ENCODE measurements at regions of chr6 and their contacts with region 1.

Region 1: DNA sequence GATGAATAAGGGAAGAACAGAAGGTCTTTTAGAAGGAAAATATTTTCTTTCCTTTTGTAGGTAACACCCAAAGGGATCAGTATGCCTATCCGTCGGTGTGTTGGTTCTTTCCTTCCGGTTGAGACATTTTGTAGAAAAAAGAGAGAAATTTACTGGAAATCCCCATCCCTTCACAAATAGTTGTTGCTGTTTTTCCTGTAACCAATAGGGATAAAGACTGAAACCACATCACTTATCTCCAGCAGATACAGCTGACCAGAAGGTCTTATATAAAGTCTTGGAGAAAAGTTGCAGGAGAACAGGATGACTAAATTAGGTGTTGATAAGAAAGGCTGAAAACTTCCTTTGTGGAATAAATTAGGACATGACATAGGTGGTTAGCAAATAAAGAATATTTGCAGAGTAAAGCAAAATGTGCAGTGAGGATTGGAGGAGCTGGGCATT is 14.8 kb upstream of the HLA-DRB1 start:
- DNase-seq: peak; percentile 87
- ATAC-seq: peak; percentile 74
- H3K4me3 ChIP-seq: peak overlapping the region in 4 of 5 experiments; percentile 39 to 57 (median 42)
- H3K4me3 Mint-ChIP-seq: peak overlapping the region; percentile 87
- H3K27ac ChIP-seq: peak overlapping the region; percentile 99 to 100
- H3K27ac Mint-ChIP-seq: peak overlapping the region; percentile 97
- H3K4me1 ChIP-seq: peaks cover 52 to 57% of the 10 kb centered on the region in 2 donors
- H3K4me1 Mint-ChIP-seq: peaks cover 69% of the 10 kb centered on the region
- H3K27me3 ChIP-seq: no peaks in the 10 kb centered on the region
- H3K27me3 Mint-ChIP-seq: no peaks in the 10 kb centered on the region
- CTCF ChIP-seq: no peak

Region 2: DNA sequence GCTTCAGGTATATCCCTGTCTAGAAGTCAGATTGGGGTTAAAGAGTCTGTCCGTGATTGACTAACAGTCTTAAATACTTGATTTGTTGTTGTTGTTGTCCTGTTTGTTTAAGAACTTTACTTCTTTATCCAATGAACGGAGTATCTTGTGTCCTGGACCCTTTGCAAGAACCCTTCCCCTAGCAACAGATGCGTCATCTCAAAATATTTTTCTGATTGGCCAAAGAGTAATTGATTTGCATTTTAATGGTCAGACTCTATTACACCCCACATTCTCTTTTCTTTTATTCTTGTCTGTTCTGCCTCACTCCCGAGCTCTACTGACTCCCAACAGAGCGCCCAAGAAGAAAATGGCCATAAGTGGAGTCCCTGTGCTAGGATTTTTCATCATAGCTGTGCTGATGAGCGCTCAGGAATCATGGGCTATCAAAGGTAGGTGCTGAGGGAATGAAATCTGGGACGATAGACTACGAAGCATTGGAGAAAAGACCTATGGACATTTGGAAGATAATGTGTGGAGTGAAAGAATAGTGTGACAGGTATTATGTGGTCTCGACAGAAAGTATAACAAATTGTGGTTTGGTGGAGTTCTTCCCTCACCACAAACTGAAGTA is 164.7 kb before region 1 on chr6 and contains the start of gene HLA-DRA:
- CTCF ChIA-PET with region 1: interaction called, 3 read pairs
- POLR2A ChIA-PET with region 1: interaction called, 5 read pairs
- intact Hi-C with region 1: loop called (anchors 1 kb)
- DNase-seq: peak; percentile 97
- ATAC-seq: peak; percentile 69
- H3K4me3 ChIP-seq: peak within 1 kb of the TSS; percentile 77 to 100 (median 99)
- H3K4me3 Mint-ChIP-seq: peak within 1 kb of the TSS; percentile 98
- H3K27ac ChIP-seq: peak within 1 kb of the TSS; percentile 99 to 100
- H3K27ac Mint-ChIP-seq: peak within 1 kb of the TSS; percentile 99
- H3K4me1 ChIP-seq: peaks cover 70 to 71% of the 10 kb centered on the region in 2 donors
- H3K4me1 Mint-ChIP-seq: peaks cover 80% of the 10 kb centered on the region
- H3K27me3 ChIP-seq: no peaks in the 10 kb centered on the region
- H3K27me3 Mint-ChIP-seq: no peaks in the 10 kb centered on the region
- CTCF ChIP-seq: no peak
- total RNA-seq, gene HLA-DRA: 2,785 and 2,881 TPM in 2 replicates

Region 3: DNA sequence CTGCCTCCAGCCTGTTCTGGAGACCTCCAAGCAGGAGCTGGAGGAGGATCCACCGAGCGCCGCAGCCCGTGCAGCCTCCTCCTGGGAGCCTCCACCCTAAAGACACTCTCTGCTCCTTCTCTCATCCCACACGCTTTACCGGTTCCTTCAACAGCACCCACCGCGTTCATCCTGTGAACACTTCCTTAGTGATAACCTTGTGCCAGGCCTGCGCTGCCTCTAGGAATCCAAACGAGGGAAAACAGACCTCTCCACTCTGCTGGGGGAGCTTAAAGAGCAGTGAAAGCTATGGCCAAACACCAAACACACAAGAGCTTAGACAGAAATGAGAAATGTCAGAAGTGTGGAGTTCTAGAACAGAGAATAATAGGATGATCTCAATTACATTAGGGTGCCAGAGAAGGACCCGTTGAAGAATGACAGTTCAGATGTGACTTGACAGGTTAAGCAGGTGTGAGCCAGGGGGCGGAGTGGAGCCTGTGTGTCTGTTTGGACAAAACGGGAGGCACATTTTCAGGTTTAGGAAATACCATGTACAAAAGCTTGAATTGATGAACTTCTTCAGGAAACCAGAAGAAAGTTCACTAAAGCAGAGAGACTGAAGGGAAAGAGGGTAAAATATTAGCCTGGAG is 45.9 kb before region 1 on chr6:
- CTCF ChIA-PET with region 1: no interaction called
- POLR2A ChIA-PET with region 1: no interaction called
- intact Hi-C with region 1: no loop called
- DNase-seq: no peak
- ATAC-seq: peak; percentile 43
- H3K4me3 ChIP-seq: peak overlapping the region in 3 of 5 experiments; percentile 25 to 43 (median 42)
- H3K4me3 Mint-ChIP-seq: peak overlapping the region; percentile 73
- H3K27ac ChIP-seq: peak overlapping the region in 1 of 2 donors; percentile 67
- H3K27ac Mint-ChIP-seq: peak overlapping the region; percentile 66
- H3K4me1 ChIP-seq: peaks cover 4 to 6% of the 10 kb centered on the region in 2 donors
- H3K4me1 Mint-ChIP-seq: peaks cover 16% of the 10 kb centered on the region
- H3K27me3 ChIP-seq: no peaks in the 10 kb centered on the region
- H3K27me3 Mint-ChIP-seq: no peaks in the 10 kb centered on the region
- CTCF ChIP-seq: no peak

Region 4: DNA sequence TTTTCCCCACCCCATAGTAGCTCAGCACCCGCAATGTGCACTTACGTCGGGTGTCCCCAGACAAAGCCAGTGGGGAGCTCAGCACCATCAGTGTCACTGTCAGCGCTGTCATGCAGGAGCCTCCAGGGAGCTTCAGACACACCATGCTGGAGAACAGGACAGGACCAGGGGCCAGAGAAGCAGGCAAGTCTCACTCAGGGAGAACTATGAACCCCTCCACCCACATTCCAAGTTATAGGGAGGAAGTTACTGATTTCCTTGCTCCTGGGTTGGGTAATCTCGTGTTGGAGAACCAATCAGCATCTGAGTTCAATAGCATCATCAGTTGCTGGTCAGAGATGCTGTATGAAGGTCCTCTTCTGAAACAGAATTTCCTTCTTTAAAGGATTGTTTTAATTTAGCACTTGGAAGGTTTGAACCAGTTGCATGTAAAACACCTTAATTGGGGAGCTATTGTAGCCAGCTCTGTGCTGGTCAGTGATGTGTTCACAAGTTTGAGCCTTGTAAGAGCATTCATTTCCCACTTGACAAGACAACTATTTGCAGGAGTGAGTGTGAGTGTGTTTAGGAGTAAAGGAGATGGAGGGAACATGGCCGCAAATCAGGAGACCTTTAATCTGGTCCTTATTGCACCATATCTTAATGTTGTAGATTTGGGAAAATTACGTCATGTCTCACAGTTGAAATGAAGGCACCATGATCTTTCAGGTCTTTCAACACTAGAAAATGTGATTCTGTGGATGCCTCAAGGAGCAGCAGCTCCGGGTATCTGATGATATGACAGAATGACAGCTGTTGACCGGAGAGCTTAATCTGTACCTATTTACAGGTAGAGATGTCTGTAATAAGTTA is 14.6 kb before region 1 on chr6 and contains the start of gene HLA-DRB1:
- CTCF ChIA-PET with region 1: interaction called, 4 read pairs
- POLR2A ChIA-PET with region 1: interaction called, 9 read pairs
- intact Hi-C with region 1: loop called (anchors 2 kb)
- DNase-seq: peak; percentile 87
- ATAC-seq: peak; percentile 94
- H3K4me3 ChIP-seq: peak within 1 kb of the TSS in 4 of 5 experiments; percentile 52 to 72 (median 62)
- H3K4me3 Mint-ChIP-seq: peak within 1 kb of the TSS; percentile 97
- H3K27ac ChIP-seq: peak within 1 kb of the TSS; percentile 74 to 86
- H3K27ac Mint-ChIP-seq: peak within 1 kb of the TSS; percentile 100
- H3K4me1 ChIP-seq: peaks cover 0 to 13% of the 10 kb centered on the region in 2 donors
- H3K4me1 Mint-ChIP-seq: peaks cover 63% of the 10 kb centered on the region
- H3K27me3 ChIP-seq: no peaks in the 10 kb centered on the region
- H3K27me3 Mint-ChIP-seq: no peaks in the 10 kb centered on the region
- CTCF ChIP-seq: no peak
- total RNA-seq, gene HLA-DRB1: 559 and 584 TPM in 2 replicates

Region 5: GRCh38 chr6:32627831-32628230 is 23.4 kb after region 1 on chr6:
- CTCF ChIA-PET with region 1: interaction called, 8 read pairs
- POLR2A ChIA-PET with region 1: interaction called, 34 read pairs
- intact Hi-C with region 1: loop called (anchors 1 kb)
- DNase-seq: peak; percentile 87
- ATAC-seq: peak; percentile 55
- H3K4me3 ChIP-seq: peak overlapping the region in 4 of 5 experiments; percentile 16 to 40 (median 30)
- H3K4me3 Mint-ChIP-seq: peak overlapping the region; percentile 95
- H3K27ac ChIP-seq: peak overlapping the region; percentile 92 to 97
- H3K27ac Mint-ChIP-seq: peak overlapping the region; percentile 100
- H3K4me1 ChIP-seq: peaks cover 60% of the 10 kb centered on the region in 2 donors
- H3K4me1 Mint-ChIP-seq: peaks cover 78% of the 10 kb centered on the region
- H3K27me3 ChIP-seq: no peaks in the 10 kb centered on the region
- H3K27me3 Mint-ChIP-seq: no peaks in the 10 kb centered on the region
- CTCF ChIP-seq: no peak

Measured in B cell (primary cell).